ENCODE measurements at regions of chr11 and their contacts with region 1.

Region 1: DNA sequence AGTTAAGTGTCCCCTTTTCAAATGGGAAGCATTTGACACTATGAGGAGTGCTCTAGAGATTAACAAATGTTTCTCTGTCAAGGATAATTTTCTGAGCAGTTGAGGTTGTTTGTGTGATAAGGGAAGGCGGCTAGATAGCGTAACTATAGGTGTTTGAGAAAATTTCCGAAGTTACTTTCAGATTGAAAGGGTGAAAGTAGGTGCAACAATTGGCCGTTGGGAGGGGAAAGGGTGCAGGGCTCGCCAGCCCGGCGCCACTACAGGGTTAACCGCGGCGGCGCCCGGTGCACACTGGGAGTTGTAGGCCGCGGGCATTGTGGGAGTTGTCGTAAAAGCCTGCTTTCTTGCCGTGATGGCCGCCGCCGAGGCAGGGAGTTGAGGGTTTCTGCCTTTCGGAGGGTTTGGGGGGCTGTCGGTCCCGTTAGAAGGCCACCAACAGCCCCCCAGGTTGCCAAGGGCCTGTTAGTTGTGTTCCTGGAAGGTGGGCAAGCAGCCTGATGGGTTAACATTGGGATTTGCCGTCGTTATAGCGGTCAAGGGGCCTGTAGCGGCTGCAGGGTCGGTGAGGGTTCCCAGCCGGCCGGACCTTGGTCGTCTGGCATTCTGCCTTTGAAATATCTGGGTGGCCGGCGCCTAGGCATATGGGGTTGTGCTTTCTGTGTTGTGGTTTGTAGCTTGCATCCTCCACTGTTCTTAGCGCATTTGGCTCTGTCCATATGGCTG is 36.5 kb upstream of the HSD17B12 start:
- DNase-seq: peak; percentile 89 to 92
- ATAC-seq: peak; percentile 99 to 100 (median 100)
- H3K4me3 ChIP-seq: peak overlapping the region; percentile 80
- H3K27ac ChIP-seq: peak overlapping the region; percentile 80
- H3K4me1 ChIP-seq: peaks cover 22% of the 10 kb centered on the region
- H3K27me3 ChIP-seq: peaks cover 1 to 12% (median 2%) of the 10 kb centered on the region in 3 donors
- CTCF ChIP-seq: no peak

Region 2: DNA sequence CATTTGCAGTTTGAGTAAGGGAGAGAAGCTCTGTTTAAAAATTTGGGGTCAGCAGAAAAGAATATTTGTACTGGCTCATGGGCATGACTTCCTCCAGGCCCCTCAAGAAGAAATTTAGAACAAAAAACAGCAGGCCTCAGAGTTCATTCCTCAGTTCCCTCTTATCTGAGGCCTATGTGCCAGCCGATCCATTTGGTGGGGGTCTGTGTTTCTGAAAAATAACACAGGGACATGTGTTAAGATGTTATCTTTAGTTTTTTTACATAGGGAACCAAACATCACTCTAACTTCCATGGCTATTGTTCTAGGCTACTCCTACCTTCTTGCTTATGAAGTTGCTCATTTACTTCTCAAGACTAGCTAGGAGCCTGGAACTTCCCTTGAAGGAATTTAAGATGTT is 20.2 kb after region 1 on chr11:
- intact Hi-C with region 1: no loop called
- DNase-seq: no peak
- ATAC-seq: no peak
- H3K4me3 ChIP-seq: no peak overlapping the region
- H3K27ac ChIP-seq: no peak overlapping the region
- H3K4me1 ChIP-seq: no peaks in the 10 kb centered on the region
- H3K27me3 ChIP-seq: no peaks in the 10 kb centered on the region
- CTCF ChIP-seq: no peak

Region 3: DNA sequence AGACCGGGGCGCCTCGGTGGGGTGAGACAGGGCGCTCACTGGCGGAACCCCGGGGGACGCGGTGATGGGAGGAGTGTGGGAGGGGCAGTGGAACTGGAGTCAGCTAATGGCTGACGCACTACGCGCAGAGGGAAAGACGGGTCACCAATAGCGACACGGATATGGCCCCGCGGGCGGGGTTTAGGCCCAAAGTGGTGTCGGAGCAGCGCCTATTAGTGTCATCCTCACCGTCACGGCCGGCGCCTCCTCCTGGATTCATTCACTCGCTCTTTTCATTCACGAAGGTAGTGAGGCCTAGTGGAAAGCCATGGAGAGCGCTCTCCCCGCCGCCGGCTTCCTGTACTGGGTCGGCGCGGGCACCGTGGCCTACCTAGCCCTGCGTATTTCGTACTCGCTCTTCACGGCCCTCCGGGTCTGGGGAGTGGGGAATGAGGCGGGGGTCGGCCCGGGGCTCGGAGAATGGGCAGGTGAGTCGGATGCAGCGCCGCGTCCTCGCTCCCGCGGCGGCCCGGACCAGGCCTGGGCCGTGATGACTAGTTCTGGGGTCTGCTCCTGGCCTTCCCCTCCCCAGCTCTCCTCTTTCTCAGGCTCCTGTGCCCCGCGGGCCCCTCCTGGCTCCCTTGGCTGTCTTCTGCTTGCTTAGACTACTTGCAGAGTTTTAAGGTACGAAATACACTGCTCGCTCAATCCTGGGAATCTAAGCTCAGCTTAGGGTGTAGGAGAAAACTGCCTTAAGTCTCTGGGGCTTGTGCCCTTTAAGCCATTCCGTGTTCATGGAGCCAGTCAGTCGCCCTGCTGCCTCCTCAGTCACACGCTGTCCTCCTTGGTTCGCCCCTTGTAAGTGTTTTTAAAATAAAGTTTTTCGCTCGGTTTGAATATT is 36.7 kb after region 1 on chr11 and contains the start of gene HSD17B12:
- intact Hi-C with region 1: loop called (anchors 5 kb)
- DNase-seq: peak; percentile 99
- ATAC-seq: peak; percentile 98 to 99 (median 99)
- H3K4me3 ChIP-seq: peak within 1 kb of the TSS; percentile 96
- H3K27ac ChIP-seq: peak within 1 kb of the TSS; percentile 96
- H3K4me1 ChIP-seq: peaks cover 26% of the 10 kb centered on the region
- H3K27me3 ChIP-seq: no peaks in the 10 kb centered on the region
- CTCF ChIP-seq: no peak
- total RNA-seq, gene HSD17B12: 44.9 to 82.0 (median 62.5) TPM